A549 (cell line): ENCODE measurements at regions of chr17 and their contacts with region 1.

Region 1: GRCh38 chr17:76278952-76279741 is 14.0 kb downstream of the UBALD2 start:
- DNase-seq: peak; percentile 78 to 96
- ATAC-seq: peak; percentile 75 to 97
- H3K4me3 ChIP-seq: no peak overlapping the region
- H3K27ac ChIP-seq: peak overlapping the region; percentile 3; a peak in 2 of 6 replicates
- H3K4me1 ChIP-seq: peaks cover 10% of the 10 kb centered on the region
- CTCF ChIP-seq: peak; percentile 100
- EP300 ChIP-seq: no peak
- POLR2A ChIP-seq: no peak
- RAD21 ChIP-seq: peak; percentile 99

Region 2: DNA sequence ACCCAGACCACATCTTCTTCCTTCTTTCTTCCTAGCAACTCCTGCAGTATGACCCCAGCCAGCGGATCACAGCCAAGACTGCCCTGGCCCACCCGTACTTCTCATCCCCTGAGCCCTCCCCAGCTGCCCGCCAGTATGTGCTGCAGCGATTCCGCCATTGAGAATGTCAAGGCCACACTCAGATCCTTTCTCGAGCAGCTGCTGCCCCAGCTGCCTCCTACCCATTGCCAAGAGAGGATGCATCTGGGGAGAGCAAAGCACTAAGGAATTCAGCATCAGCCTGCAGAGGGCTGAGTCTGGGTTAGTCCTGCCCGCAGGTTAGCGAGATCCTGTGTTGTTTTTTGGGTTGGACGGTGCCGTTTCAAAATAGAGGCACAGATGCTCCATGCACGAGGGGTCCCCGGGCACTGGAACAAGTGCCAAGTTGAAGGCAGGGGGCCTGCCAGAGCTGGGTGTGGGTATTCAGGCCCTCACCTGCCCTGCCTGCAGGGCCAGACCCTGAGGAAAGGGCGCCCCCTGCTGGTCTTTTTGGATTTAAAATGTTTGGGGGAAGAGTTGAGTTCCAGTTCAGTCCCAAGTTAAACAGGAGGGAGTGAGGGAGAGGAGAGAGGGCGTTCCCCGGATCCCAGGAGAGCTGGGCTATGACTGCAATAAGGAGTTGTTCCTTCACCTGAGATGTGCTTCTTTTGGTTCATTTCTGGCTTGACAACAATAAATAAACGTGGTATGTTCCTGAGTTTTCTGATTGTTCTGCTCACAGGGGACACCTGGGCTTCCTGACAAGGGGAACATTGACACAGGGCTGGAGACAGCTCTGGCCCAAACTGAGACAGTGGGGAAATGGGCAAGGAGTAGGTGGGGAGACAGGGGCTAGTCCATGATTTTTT is 273.6 kb before region 1 on chr17:
- CTCF ChIA-PET with region 1: interaction called, 117 read pairs
- POLR2A ChIA-PET with region 1: no interaction called
- DNase-seq: peak; percentile 78 to 83
- ATAC-seq: peak; percentile 55 to 80; a peak in 5 of 6 replicates
- H3K4me3 ChIP-seq: no peak overlapping the region
- H3K27ac ChIP-seq: no peak overlapping the region
- H3K4me1 ChIP-seq: no peaks in the 10 kb centered on the region
- CTCF ChIP-seq: peak; percentile 94
- EP300 ChIP-seq: no peak
- POLR2A ChIP-seq: no peak
- RAD21 ChIP-seq: peak; percentile 81 to 88

Region 3: GRCh38 chr17:76091526-76092285 is 187.4 kb before region 1 on chr17:
- CTCF ChIA-PET with region 1: interaction called, 12 read pairs
- POLR2A ChIA-PET with region 1: no interaction called
- DNase-seq: no peak
- ATAC-seq: no peak
- H3K4me3 ChIP-seq: no peak overlapping the region
- H3K27ac ChIP-seq: no peak overlapping the region
- H3K4me1 ChIP-seq: no peaks in the 10 kb centered on the region
- CTCF ChIP-seq: no peak
- EP300 ChIP-seq: no peak
- POLR2A ChIP-seq: no peak
- RAD21 ChIP-seq: no peak

Region 4: GRCh38 chr17:76160896-76161528 is 118.1 kb before region 1 on chr17:
- CTCF ChIA-PET with region 1: interaction called, 37 read pairs
- POLR2A ChIA-PET with region 1: no interaction called
- DNase-seq: no peak
- ATAC-seq: no peak
- H3K4me3 ChIP-seq: no peak overlapping the region
- H3K27ac ChIP-seq: no peak overlapping the region
- H3K4me1 ChIP-seq: 0 out of 3 replicates have a peak, but pooled peaks cover 2% of the 10 kb centered on the region
- CTCF ChIP-seq: no peak
- EP300 ChIP-seq: no peak
- POLR2A ChIP-seq: no peak
- RAD21 ChIP-seq: no peak

Region 5: GRCh38 chr17:76204277-76204676 is 74.9 kb before region 1 on chr17:
- CTCF ChIA-PET with region 1: interaction called, 37 read pairs
- POLR2A ChIA-PET with region 1: no interaction called
- DNase-seq: peak; percentile 36 to 75
- ATAC-seq: peak; percentile 91
- H3K4me3 ChIP-seq: no peak overlapping the region
- H3K27ac ChIP-seq: peak overlapping the region; percentile 3 to 72; a peak in 3 of 6 replicates
- H3K4me1 ChIP-seq: peaks cover 17% of the 10 kb centered on the region
- CTCF ChIP-seq: no peak
- EP300 ChIP-seq: no peak
- POLR2A ChIP-seq: no peak
- RAD21 ChIP-seq: no peak

Region 6: GRCh38 chr17:76246080-76247066 is 32.8 kb before region 1 on chr17:
- CTCF ChIA-PET with region 1: interaction called, 164 read pairs
- POLR2A ChIA-PET with region 1: interaction called, 4 read pairs
- DNase-seq: no peak
- ATAC-seq: peak; percentile 34 to 62; a peak in 5 of 6 replicates
- H3K4me3 ChIP-seq: no peak overlapping the region
- H3K27ac ChIP-seq: no peak overlapping the region
- H3K4me1 ChIP-seq: peaks cover 6% of the 10 kb centered on the region
- CTCF ChIP-seq: no peak
- EP300 ChIP-seq: no peak
- POLR2A ChIP-seq: no peak
- RAD21 ChIP-seq: no peak

Region 7: DNA sequence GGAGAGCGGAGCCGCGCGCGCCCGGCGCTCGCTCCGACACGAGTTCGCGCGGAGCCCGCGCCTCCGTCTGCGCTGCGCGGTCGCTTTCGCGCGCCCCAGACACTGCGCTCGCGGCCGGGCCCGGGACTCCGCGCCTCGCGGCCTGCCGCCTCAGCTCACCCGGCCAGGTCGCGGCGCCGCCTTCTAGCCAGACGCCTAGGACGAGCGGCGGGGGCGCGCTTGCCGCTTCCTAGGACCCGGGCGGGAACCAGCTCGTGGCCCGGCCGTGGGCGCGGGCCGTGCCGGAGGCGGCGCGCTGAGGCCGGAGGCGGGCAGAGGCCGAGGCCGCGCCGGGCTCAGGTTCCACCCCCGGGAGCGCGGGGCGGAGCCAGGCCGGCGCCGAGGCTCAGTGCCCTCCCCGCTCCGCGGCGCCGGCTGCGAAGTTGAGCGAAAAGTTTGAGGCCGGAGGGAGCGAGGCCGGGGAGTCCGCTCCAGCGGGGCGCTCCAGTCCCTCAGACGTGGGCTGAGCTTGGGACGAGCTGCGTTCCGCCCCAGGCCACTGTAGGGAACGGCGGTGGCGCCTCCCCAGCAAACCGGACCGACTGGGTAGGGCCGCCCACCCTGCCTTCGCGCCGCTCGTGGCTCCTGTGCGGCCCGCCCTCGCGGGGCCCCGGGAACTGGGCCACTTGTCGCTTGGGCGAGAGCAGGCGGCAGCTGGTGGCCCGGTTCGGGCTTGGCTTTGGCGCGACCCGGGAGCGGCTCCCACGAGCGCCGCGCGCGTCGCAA is 105.3 kb after region 1 on chr17 and contains the start of gene SPHK1:
- CTCF ChIA-PET with region 1: interaction called, 17 read pairs
- POLR2A ChIA-PET with region 1: no interaction called
- DNase-seq: peak; percentile 84 to 90
- ATAC-seq: peak; percentile 57 to 69
- H3K4me3 ChIP-seq: peak within 1 kb of the TSS; percentile 62
- H3K27ac ChIP-seq: peak within 1 kb of the TSS; percentile 71 to 88
- H3K4me1 ChIP-seq: peaks cover 20% of the 10 kb centered on the region
- CTCF ChIP-seq: no peak; the same call in 2 of the 3 replicates
- EP300 ChIP-seq: no peak
- POLR2A ChIP-seq: peak; percentile 55; the same call in 1 of the 2 replicates
- RAD21 ChIP-seq: no peak
- polyA plus RNA-seq, gene SPHK1: 4.6 and 4.7 TPM in 2 replicates